Esophagus muscularis mucosa (tissue), 4 donors: ENCODE measurements at regions of chr18 and their contacts with region 1.

Region 1: DNA sequence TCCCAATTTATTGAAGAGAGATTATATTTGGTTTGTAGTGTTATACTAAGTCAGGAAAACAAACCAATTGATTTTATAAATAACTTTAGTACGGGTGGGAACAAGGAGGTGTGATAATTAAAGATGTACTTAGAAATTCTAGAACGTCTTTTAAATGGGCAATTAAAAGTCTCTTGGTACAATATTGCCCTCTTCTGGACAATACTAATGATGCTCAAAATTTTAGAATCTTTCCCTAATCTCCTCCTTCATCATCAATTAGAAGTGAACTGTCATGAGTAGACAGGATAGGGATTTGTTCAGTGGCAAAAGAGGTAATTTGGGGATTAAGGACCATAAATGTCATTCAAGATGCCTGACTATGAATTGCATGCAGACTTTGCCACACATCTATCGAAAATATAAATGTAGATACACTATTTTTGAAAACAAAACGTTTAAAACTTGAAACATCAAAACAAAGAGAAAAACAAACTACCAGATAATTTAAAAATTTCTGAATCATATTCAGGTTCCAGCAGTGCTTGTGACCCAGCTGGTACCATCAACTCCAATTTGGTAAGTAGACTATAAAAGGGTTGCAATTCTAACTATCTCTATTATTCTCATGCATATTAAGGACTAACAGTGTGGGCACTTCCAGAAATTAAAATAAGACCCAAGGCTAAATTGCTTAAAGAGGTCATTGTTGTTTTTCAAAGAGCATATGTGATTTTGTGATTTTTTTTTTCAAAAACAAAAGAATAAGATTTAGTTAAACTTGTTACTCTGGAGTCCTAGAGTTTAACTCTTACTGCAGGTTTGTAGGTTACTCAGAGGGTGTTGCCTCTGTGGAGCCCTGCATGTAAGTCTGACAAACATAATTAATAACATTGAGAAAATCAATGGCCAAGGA is 123.5 kb downstream of the LAMA3 start:
- DNase-seq: no peak
- H3K4me3 ChIP-seq: no peak overlapping the region
- H3K27ac ChIP-seq: no peak overlapping the region
- H3K4me1 ChIP-seq: peaks cover 0 to 17% (median 0%) of the 10 kb centered on the region in 4 donors
- H3K27me3 ChIP-seq: no peaks in the 10 kb centered on the region
- CTCF ChIP-seq: peak; percentile 58 to 69 (median 60)
- EP300 ChIP-seq: no peak
- POLR2A ChIP-seq: no peak

Region 2: DNA sequence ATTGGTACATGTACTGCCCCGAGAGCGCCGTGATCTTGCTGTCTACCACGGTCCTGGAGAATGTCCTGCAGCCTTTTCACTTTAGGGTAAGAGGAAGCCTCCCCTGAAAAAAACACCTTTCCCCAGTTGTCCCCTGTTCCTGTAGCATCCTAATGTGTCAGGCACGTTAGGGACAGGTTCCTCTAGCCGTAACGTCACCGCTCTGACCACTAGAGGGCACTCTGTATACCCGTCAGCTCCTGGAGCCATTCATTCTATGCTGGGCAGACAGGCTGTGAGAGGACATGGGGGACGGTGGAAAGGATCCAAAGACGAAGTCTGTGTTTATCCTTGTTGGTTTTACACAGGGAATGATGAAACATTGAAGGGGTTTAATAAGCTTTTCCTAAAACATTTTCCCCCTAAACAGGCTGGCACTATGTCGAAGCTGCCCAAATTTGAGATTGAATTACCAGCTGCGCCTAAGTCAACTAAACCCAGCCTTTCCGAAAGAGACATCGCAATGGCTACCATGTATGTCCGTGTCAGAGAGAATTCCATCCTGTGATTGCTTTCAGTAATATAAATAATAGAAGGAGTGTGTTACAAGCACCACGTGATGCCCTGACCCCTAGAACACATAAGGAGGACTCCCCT is 296.8 kb before region 1 on chr18:
- intact Hi-C with region 1: loop called (anchors 10 kb)
- DNase-seq: no peak
- H3K4me3 ChIP-seq: no peak overlapping the region
- H3K27ac ChIP-seq: peak overlapping the region in 1 of 4 donors; percentile 41
- H3K4me1 ChIP-seq: peaks cover 0 to 17% (median 8%) of the 10 kb centered on the region in 4 donors
- H3K27me3 ChIP-seq: no peaks in the 10 kb centered on the region
- CTCF ChIP-seq: peak; percentile 70 to 89 (median 79)
- EP300 ChIP-seq: no peak
- POLR2A ChIP-seq: no peak

Region 3: DNA sequence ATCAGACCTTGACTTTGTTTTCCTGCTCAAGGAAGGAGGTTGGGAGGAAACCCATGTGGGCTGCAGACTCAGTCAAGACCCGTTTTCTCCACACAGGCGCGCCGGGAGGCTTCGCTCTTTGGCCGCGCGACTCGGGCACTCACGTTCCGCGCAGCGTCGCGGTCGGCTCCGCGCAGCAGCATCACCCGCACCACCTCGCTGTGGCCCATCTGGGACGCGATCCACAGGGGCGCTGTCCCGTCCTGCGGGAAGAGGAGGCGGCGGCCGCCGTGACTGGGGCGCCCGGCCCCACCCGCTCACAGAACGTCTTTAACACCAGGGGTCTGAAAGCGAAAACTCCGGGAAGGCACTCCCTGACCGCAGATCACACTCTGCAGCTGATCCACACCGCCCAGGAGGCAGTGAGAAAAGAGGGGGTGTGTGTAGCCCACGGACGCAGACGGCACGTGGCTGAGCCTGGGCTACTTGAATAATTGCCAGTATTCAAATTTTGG is 193.4 kb before region 1 on chr18:
- intact Hi-C with region 1: loop called (anchors 2 kb)
- DNase-seq: no peak
- H3K4me3 ChIP-seq: peak overlapping the region; percentile 54 to 63 (median 56)
- H3K27ac ChIP-seq: peak overlapping the region; percentile 85 to 91 (median 90)
- H3K4me1 ChIP-seq: peaks cover 13 to 44% (median 24%) of the 10 kb centered on the region in 4 donors
- H3K27me3 ChIP-seq: no peaks in the 10 kb centered on the region
- CTCF ChIP-seq: peak in 1 of 3 experiments; percentile 17
- EP300 ChIP-seq: no peak
- POLR2A ChIP-seq: no peak

Region 4: DNA sequence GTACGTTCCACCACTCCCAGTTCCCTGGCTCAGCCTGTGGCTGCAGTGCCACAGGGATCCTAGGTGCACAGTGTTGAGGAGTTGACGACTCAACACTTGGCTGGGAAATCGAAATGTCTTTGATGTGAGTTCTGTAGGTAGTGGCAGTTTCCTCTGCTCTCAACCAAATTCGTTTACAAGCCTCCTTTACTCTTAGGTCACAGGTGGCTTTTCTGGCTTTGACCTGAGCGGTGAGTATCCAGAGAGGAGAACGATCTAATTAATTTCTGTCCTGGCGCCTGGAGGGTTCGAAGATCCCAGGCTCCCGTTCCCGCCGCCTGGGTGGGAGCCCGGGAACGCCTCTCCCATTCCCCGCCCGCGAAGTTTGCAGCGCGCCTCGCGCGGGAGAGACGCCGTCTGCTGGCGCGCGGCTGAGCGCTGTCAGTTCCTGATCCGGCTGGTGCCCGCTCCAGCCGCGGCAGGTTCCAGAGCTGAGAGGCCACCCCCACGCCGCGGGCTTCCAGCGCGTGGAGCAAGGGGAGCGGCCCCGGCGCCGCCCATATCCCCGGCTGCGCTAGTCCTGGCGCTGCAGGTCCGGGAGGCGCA is 123.7 kb before region 1 on chr18 and contains the start of gene LAMA3:
- intact Hi-C with region 1: loop called (anchors 10 kb)
- DNase-seq: no peak
- H3K4me3 ChIP-seq: peak within 1 kb of the TSS; percentile 67 to 85 (median 72)
- H3K27ac ChIP-seq: peak within 1 kb of the TSS; percentile 66 to 80 (median 69)
- H3K4me1 ChIP-seq: peaks cover 7 to 27% (median 24%) of the 10 kb centered on the region in 4 donors
- H3K27me3 ChIP-seq: peaks cover 0 to 11% (median 0%) of the 10 kb centered on the region in 4 donors
- CTCF ChIP-seq: peak in 2 of 3 experiments; percentile 8 to 40
- EP300 ChIP-seq: no peak
- POLR2A ChIP-seq: no peak
- total RNA-seq, gene LAMA3: 7.5 to 12.9 (median 11.7) TPM

Region 5: GRCh38 chr18:23861805-23862470 is 49.1 kb after region 1 on chr18:
- intact Hi-C with region 1: no loop called
- DNase-seq: no peak
- H3K4me3 ChIP-seq: no peak overlapping the region
- H3K27ac ChIP-seq: peak overlapping the region in 2 of 4 donors; percentile 46 to 52
- H3K4me1 ChIP-seq: no peaks in the 10 kb centered on the region
- H3K27me3 ChIP-seq: no peaks in the 10 kb centered on the region
- CTCF ChIP-seq: no peak
- EP300 ChIP-seq: no peak
- POLR2A ChIP-seq: no peak